Naive thymus-derived CD4-positive, alpha-beta T cell (primary cell): ENCODE measurements at regions of chr16 and their contacts with region 1.

Region 1: GRCh38 chr16:2340564-2341455 is at the start of gene ABCA3:
- DNase-seq: peak; percentile 85 to 100 (median 93)
- ATAC-seq: peak; percentile 96
- H3K4me3 ChIP-seq: peak within 1 kb of the TSS; percentile 62
- H3K4me3 Mint-ChIP-seq: peak within 1 kb of the TSS; percentile 78 to 91 (median 86)
- H3K27ac ChIP-seq: peak within 1 kb of the TSS; percentile 15
- H3K27ac Mint-ChIP-seq: peak within 1 kb of the TSS in 7 of 9 donors; percentile 31 to 82 (median 64)
- H3K4me1 ChIP-seq: peaks cover 6 to 9% of the 10 kb centered on the region in 2 donors
- H3K4me1 Mint-ChIP-seq: peaks cover 9 to 19% (median 16%) of the 10 kb centered on the region in 7 donors
- H3K27me3 ChIP-seq: no peaks in the 10 kb centered on the region
- H3K27me3 Mint-ChIP-seq: peaks cover 0 to 40% (median 0%) of the 10 kb centered on the region in 5 donors
- total RNA-seq, gene ABCA3: 7.0 to 10.0 (median 8.1) TPM

Region 2: DNA sequence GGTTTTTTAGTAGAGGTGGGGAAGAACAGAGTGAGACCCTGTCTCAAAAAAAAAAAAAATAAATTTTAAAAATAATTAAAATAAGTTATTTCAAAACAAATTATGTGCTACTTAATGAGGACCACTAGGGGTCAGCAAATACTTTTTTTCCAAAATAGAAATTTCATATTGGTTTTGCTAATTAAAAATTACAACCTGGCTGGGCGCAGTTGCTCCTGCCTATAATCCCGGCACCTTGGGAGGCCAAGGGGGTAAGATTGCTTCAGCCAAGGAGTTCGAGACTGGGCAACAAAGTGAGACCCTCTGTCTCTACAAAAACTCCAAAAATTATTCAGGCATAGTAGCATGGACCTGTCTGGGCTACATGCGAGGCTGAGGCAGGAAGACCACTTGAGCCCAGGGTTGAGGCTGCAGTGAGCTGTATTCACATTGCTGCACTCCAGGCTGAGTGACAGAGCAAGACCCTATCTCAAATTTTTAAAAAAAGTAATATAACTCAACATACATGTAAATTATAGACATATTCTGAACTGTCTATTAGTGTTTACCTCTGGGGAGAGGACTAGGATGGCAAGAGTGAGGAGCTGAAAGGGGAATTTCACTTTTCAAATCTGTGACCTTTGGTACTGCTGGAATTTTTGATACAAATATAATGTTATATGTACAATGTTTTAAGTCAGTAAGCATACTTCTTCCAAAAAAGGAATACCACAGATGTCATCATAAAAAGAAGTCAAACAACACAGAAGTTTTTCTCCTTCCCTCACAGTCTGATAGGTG is 476.9 kb before region 1 on chr16:
- CTCF ChIA-PET with region 1: no interaction called
- POLR2A ChIA-PET with region 1: no interaction called
- intact Hi-C with region 1: no loop called
- DNase-seq: peak in 6 of 9 donors; percentile 21 to 43 (median 35)
- ATAC-seq: no peak
- H3K4me3 ChIP-seq: no peak overlapping the region
- H3K4me3 Mint-ChIP-seq: no peak overlapping the region
- H3K27ac ChIP-seq: no peak overlapping the region
- H3K27ac Mint-ChIP-seq: peak overlapping the region in 1 of 9 donors; percentile 14
- H3K4me1 ChIP-seq: no peaks in the 10 kb centered on the region
- H3K4me1 Mint-ChIP-seq: no peaks in the 10 kb centered on the region
- H3K27me3 ChIP-seq: no peaks in the 10 kb centered on the region
- H3K27me3 Mint-ChIP-seq: peaks cover 0 to 44% (median 9%) of the 10 kb centered on the region in 5 donors

Region 3: GRCh38 chr16:1929578-1930337 is 411.1 kb before region 1 on chr16:
- CTCF ChIA-PET with region 1: no interaction called
- POLR2A ChIA-PET with region 1: no interaction called
- intact Hi-C with region 1: no loop called
- DNase-seq: peak; percentile 83 to 99 (median 91)
- ATAC-seq: peak; percentile 100
- H3K4me3 ChIP-seq: peak overlapping the region; percentile 48
- H3K4me3 Mint-ChIP-seq: peak overlapping the region in 6 of 10 donors; percentile 30 to 82 (median 74)
- H3K27ac ChIP-seq: peak overlapping the region; percentile 64
- H3K27ac Mint-ChIP-seq: no peak overlapping the region
- H3K4me1 ChIP-seq: no peaks in the 10 kb centered on the region
- H3K4me1 Mint-ChIP-seq: peaks cover 2 to 8% (median 4%) of the 10 kb centered on the region in 7 donors
- H3K27me3 ChIP-seq: no peaks in the 10 kb centered on the region
- H3K27me3 Mint-ChIP-seq: peaks cover 0 to 3% (median 2%) of the 10 kb centered on the region in 5 donors

Region 4: GRCh38 chr16:2459647-2460390 is 119.0 kb after region 1 on chr16 and contains the start of gene TEDC2:
- CTCF ChIA-PET with region 1: no interaction called
- POLR2A ChIA-PET with region 1: no interaction called
- intact Hi-C with region 1: loop called in 1 of 2 experiments (anchors 1 kb)
- DNase-seq: peak; percentile 92 to 98 (median 94)
- ATAC-seq: peak; percentile 100
- H3K4me3 ChIP-seq: peak within 1 kb of the TSS; percentile 63
- H3K4me3 Mint-ChIP-seq: peak within 1 kb of the TSS; percentile 75 to 95 (median 88)
- H3K27ac ChIP-seq: peak within 1 kb of the TSS; percentile 57
- H3K27ac Mint-ChIP-seq: peak within 1 kb of the TSS in 7 of 9 donors; percentile 3 to 94 (median 69)
- H3K4me1 ChIP-seq: peaks cover 5 to 8% of the 10 kb centered on the region in 2 donors
- H3K4me1 Mint-ChIP-seq: peaks cover 4 to 14% (median 5%) of the 10 kb centered on the region in 7 donors
- H3K27me3 ChIP-seq: no peaks in the 10 kb centered on the region
- H3K27me3 Mint-ChIP-seq: no peaks in the 10 kb centered on the region
- total RNA-seq, gene TEDC2: 0.32 to 16.7 (median 0.71) TPM in 4 of 5 experiments, not detected in the other

Region 5: DNA sequence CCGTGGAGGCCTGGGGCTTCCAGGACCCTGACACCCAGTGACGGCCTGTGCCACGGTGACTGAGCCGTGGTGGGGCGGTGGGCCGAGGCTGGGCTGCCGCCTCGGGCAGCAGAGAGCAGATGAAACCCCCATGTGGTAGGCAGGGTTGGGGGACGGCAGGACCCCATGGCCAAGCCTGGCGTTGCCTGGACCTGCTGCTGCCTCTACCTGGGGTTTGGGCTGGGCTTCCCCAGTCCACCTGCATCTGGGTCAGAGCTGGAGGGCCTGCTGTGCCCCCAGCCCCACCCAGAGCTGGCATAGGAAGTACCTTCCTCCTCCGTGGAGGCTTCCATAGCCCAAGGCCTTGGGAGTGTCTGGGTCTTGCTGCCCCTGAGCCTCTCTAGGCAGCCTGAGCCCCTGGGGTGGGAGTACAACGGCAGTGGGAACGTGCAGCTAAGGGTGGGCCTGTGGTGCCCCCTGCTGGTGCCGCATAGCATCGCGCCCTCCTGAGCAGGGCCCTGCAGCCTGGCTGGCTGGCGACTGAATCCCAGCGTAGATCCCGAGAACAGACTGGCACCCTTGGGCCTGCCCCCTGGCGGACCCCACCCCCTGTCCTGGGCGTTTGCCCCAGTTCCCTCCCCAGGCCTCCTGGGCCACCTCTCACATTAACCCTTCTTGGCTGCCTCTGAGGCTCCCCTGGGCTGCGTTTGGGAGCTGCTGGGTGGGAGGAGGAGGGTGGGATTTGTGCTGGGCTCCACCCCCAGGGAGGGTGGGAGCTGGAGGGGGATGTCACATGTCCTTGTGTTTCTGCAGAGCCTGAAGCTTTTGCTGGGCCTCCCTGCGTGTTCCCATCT is 160.3 kb after region 1 on chr16:
- CTCF ChIA-PET with region 1: no interaction called
- POLR2A ChIA-PET with region 1: no interaction called
- intact Hi-C with region 1: loop called (anchors 1 kb)
- DNase-seq: peak; percentile 64 to 85 (median 74)
- ATAC-seq: peak; percentile 97
- H3K4me3 ChIP-seq: no peak overlapping the region
- H3K4me3 Mint-ChIP-seq: no peak overlapping the region
- H3K27ac ChIP-seq: no peak overlapping the region
- H3K27ac Mint-ChIP-seq: no peak overlapping the region
- H3K4me1 ChIP-seq: no peaks in the 10 kb centered on the region
- H3K4me1 Mint-ChIP-seq: peaks cover 0 to 3% (median 0%) of the 10 kb centered on the region in 7 donors
- H3K27me3 ChIP-seq: no peaks in the 10 kb centered on the region
- H3K27me3 Mint-ChIP-seq: no peaks in the 10 kb centered on the region